ENCODE measurements at regions of chr14 and their contacts with region 1.

Region 1: GRCh38 chr14:75069045-75069810 is at the start of gene ZC2HC1C:
- DNase-seq: peak; percentile 65
- ATAC-seq: peak; percentile 87
- H3K4me3 Mint-ChIP-seq: peak within 1 kb of the TSS; percentile 21
- H3K27ac Mint-ChIP-seq: peak within 1 kb of the TSS; percentile 53
- H3K4me1 Mint-ChIP-seq: peaks cover 4% of the 10 kb centered on the region
- H3K27me3 Mint-ChIP-seq: no peaks in the 10 kb centered on the region
- CTCF ChIP-seq: no peak
- total RNA-seq, gene ZC2HC1C: 0.91 TPM in 1 of 2 replicates, not detected in the other

Region 2: DNA sequence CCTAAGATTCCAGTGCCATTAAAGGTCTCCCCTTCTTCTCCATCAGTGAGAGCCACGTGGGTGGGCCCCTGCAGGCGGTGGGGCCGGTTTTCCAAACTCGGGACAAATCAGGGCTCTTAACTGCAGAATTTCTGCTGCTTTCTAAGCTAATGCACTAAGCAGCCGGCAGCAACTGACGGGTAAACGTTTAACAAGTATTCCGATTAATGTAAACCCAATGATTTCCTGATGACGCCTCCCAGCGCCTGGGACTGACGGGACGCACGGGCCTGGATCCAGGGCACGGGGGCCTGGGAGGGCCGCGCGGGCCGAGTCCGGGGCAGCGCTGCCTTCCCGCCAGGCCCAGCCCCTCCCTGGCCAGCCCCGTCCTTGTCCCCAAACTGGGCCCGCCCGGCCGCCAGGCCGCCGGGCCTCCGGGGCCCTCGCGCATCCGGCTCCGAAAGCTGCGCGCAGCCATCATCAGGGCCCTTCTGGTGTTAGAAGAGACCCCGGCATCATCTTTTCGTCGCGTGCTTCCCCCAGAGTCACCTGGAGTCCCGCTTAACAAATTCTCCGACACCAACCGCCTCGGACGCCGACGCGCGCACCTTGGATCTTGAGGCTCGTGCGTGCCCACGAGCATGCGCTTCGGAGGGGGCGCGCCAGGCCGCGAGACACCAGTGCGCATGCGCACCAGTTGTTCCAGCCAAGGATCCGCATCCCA is 18.2 kb before region 1 on chr14 and contains the start of gene MLH3:
- CTCF ChIA-PET with region 1: interaction called, 4 read pairs
- POLR2A ChIA-PET with region 1: interaction called, 6 read pairs
- intact Hi-C with region 1: loop called (anchors 2 kb)
- DNase-seq: peak; percentile 75
- ATAC-seq: peak; percentile 80
- H3K4me3 Mint-ChIP-seq: peak within 1 kb of the TSS; percentile 92
- H3K27ac Mint-ChIP-seq: peak within 1 kb of the TSS; percentile 83
- H3K4me1 Mint-ChIP-seq: peaks cover 19% of the 10 kb centered on the region
- H3K27me3 Mint-ChIP-seq: no peaks in the 10 kb centered on the region
- CTCF ChIP-seq: no peak
- total RNA-seq, gene MLH3: 20.0 and 21.7 TPM in 2 replicates

Region 3: GRCh38 chr14:75126679-75127473 is 57.6 kb after region 1 on chr14 and contains the start of gene NEK9:
- CTCF ChIA-PET with region 1: no interaction called
- POLR2A ChIA-PET with region 1: interaction called, 13 read pairs
- intact Hi-C with region 1: no loop called
- DNase-seq: peak; percentile 86
- ATAC-seq: peak; percentile 88
- H3K4me3 Mint-ChIP-seq: peak within 1 kb of the TSS; percentile 96
- H3K27ac Mint-ChIP-seq: peak within 1 kb of the TSS; percentile 94
- H3K4me1 Mint-ChIP-seq: peaks cover 38% of the 10 kb centered on the region
- H3K27me3 Mint-ChIP-seq: no peaks in the 10 kb centered on the region
- CTCF ChIP-seq: no peak
- total RNA-seq, gene NEK9: 96.1 and 97.7 TPM in 2 replicates

Measured in activated B cell treated with CpG ODN at 0.5 μM for 24 hours (primary cell).